Gastrocnemius medialis (tissue), 4 donors: ENCODE measurements at regions of chr16 and their contacts with region 1.

Region 1: GRCh38 chr16:31142109-31143010 is 6.8 kb upstream of the PRSS8 start:
- DNase-seq: peak; percentile 97 to 99
- ATAC-seq: peak; percentile 78 to 83
- H3K4me3 ChIP-seq: peak overlapping the region; percentile 42 to 75 (median 58)
- H3K27ac ChIP-seq: peak overlapping the region; percentile 79 to 88 (median 82)
- H3K4me1 ChIP-seq: peaks cover 19 to 22% of the 10 kb centered on the region in 2 donors
- H3K27me3 ChIP-seq: no peaks in the 10 kb centered on the region
- CTCF ChIP-seq: peak; percentile 98 to 100 (median 99)
- POLR2A ChIP-seq: peak; percentile 28 to 46

Region 2: GRCh38 chr16:31032736-31033708 is 109.3 kb before region 1 on chr16 and contains the start of gene STX4:
- in situ Hi-C with region 1: no loop called
- intact Hi-C with region 1: loop called (anchors 1 kb)
- DNase-seq: peak; percentile 97 to 98
- ATAC-seq: peak; percentile 91 to 93
- H3K4me3 ChIP-seq: peak within 1 kb of the TSS; percentile 82 to 99 (median 95)
- H3K27ac ChIP-seq: peak within 1 kb of the TSS; percentile 91 to 98 (median 92)
- H3K4me1 ChIP-seq: peaks cover 8 to 14% of the 10 kb centered on the region in 2 donors
- H3K27me3 ChIP-seq: no peaks in the 10 kb centered on the region
- CTCF ChIP-seq: peak in 3 of 5 experiments; percentile 2 to 54 (median 44)
- POLR2A ChIP-seq: peak; percentile 54 to 68
- total RNA-seq, gene STX4: 14.9 to 24.3 (median 21.4) TPM

Region 3: GRCh38 chr16:31044190-31044481 is 98.2 kb before region 1 on chr16:
- in situ Hi-C with region 1: no loop called
- intact Hi-C with region 1: no loop called
- DNase-seq: no peak
- ATAC-seq: no peak
- H3K4me3 ChIP-seq: no peak overlapping the region
- H3K27ac ChIP-seq: no peak overlapping the region
- H3K4me1 ChIP-seq: no peaks in the 10 kb centered on the region
- H3K27me3 ChIP-seq: no peaks in the 10 kb centered on the region
- CTCF ChIP-seq: no peak
- POLR2A ChIP-seq: no peak

Region 4: GRCh38 chr16:31094424-31095120 is 47.8 kb before region 1 on chr16 and contains the start of gene VKORC1:
- in situ Hi-C with region 1: no loop called
- intact Hi-C with region 1: loop called (anchors 1 kb)
- DNase-seq: peak; percentile 95 to 96
- ATAC-seq: peak; percentile 94 to 98
- H3K4me3 ChIP-seq: peak within 1 kb of the TSS; percentile 74 to 86 (median 77)
- H3K27ac ChIP-seq: peak within 1 kb of the TSS; percentile 88 to 94 (median 94)
- H3K4me1 ChIP-seq: peaks cover 8 to 13% of the 10 kb centered on the region in 2 donors
- H3K27me3 ChIP-seq: no peaks in the 10 kb centered on the region
- CTCF ChIP-seq: peak in 3 of 5 experiments; percentile 10 to 12 (median 11)
- POLR2A ChIP-seq: peak; percentile 76 to 79
- total RNA-seq, gene VKORC1: 20.1 to 35.9 (median 32.9) TPM

Region 5: DNA sequence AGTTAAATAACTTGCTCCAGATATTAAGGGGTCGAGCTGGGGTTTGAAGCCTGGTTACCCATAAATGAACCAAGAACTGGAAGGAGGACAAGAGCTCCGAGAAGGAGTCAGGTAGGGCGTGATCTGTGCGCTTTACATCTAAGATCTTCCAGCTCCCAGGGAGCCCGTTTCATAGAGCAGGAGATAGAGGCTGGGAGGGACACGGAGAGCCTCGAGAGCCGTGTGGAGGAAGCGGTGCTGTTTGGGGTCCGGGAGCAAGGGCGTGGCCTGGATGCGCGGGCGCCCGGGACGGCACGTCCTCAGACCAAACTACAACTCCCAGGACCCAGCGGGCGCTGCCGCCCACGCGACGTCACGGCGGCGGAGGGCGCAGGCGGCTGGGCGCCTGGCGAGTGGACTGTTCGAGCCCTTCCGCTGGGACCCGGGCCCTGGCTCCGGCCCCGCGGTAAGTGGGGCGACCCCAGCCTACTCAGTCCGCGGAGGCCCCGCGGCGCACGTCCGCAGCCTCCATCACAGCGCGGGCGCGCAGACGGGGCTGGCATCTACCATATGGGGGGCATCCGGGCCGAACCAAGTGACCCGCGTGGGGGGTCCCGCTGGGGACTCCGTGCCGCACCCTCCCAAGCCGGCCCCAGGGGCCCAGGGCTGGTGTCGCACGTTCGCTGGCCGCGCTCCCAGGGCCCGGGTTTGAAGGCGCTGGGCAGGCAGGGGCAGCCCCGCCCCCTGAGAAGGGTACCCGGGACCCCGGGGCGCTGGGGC is 34.1 kb before region 1 on chr16 and contains the start of gene BCKDK:
- in situ Hi-C with region 1: no loop called
- intact Hi-C with region 1: loop called (anchors 2 kb)
- DNase-seq: peak; percentile 52 to 70
- ATAC-seq: peak; percentile 50
- H3K4me3 ChIP-seq: peak within 1 kb of the TSS; percentile 74 to 98 (median 92)
- H3K27ac ChIP-seq: peak within 1 kb of the TSS; percentile 85 to 100 (median 97)
- H3K4me1 ChIP-seq: peaks cover 35 to 43% of the 10 kb centered on the region in 2 donors
- H3K27me3 ChIP-seq: no peaks in the 10 kb centered on the region
- CTCF ChIP-seq: no peak
- POLR2A ChIP-seq: peak; percentile 71 to 81
- total RNA-seq, gene BCKDK: 24.7 to 68.9 (median 50.9) TPM

Region 6: DNA sequence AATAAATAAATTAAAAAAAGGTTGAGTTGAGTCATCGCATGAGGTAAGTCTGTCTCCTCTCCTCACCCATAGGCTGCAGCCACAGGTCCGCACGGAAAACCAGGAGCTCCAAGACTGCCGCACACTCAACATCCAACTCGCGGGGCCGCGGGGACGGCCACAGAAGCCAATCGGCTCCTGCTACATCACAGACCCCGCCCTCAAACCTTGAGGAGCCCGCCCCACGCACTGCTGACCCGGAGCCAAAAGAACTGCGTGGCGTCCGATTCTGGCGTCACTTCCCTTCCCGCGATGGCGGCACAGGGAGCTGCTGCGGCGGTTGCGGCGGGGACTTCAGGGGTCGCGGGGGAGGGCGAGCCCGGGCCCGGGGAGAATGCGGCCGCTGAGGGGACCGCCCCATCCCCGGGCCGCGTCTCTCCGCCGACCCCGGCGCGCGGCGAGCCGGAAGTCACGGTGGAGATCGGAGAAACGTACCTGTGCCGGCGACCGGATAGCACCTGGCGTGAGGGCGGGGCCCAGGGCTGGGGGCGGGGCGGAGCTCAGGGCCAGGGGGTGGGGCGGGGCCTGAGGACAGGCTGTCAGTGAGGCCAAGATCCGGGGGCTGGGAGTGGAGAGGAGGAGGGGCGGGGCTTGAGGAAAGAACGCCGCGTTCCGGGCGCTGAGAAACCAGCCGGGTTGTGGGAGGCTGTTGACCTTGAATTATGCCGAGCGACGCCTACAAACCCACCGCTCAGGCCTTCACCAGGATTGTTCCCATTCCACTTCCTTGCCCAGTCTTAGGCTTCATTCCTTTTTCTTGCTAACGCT is 24.8 kb before region 1 on chr16 and contains the start of gene KAT8:
- in situ Hi-C with region 1: no loop called
- intact Hi-C with region 1: loop called (anchors 1 kb)
- DNase-seq: peak; percentile 98
- ATAC-seq: peak; percentile 82 to 92
- H3K4me3 ChIP-seq: peak within 1 kb of the TSS; percentile 69 to 82 (median 71)
- H3K27ac ChIP-seq: peak within 1 kb of the TSS; percentile 88 to 100 (median 96)
- H3K4me1 ChIP-seq: peaks cover 32% of the 10 kb centered on the region in 2 donors
- H3K27me3 ChIP-seq: no peaks in the 10 kb centered on the region
- CTCF ChIP-seq: no peak
- POLR2A ChIP-seq: peak; percentile 90 to 93
- total RNA-seq, gene KAT8: 44.3 to 102 (median 54.3) TPM